Panc1 (cell line): ENCODE measurements at regions of chr17 and their contacts with region 1.

Region 1: DNA sequence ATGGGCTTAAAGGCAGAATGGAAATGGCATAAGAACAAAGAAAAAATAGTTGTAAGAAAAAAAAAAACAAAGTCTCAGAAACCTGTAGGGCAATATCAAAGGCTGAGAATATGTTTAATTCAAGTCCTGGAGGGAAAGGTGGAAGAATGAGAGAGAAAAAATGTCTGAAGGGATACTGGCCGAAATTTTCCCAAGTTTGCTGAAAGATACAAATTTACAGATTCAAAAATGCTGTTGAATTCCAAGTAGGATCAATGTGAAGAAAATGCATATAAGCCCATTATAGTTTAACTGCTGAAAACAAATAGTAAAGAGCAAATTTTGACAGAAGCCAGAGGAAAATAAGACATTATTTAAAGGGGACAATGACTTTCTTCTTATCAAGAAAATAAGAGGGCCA is 6.6 kb upstream of the USP22 start:
- DNase-seq: no peak
- ATAC-seq: no peak
- H3K4me3 ChIP-seq: no peak overlapping the region
- H3K27ac ChIP-seq: no peak overlapping the region
- H3K4me1 ChIP-seq: peaks cover 4% of the 10 kb centered on the region; the same call in 1 of the 2 replicates
- H3K27me3 ChIP-seq: no peaks in the 10 kb centered on the region
- CTCF ChIP-seq: no peak

Region 2: GRCh38 chr17:21098934-21099689 is 49.7 kb after region 1 on chr17:
- CTCF ChIA-PET with region 1: interaction called, 12 read pairs
- POLR2A ChIA-PET with region 1: no interaction called
- in situ Hi-C with region 1: no loop called
- intact Hi-C with region 1: no loop called
- DNase-seq: peak; percentile 55
- ATAC-seq: peak; percentile 99
- H3K4me3 ChIP-seq: peak overlapping the region; percentile 82 to 94
- H3K27ac ChIP-seq: peak overlapping the region; percentile 83
- H3K4me1 ChIP-seq: no peaks in the 10 kb centered on the region
- H3K27me3 ChIP-seq: no peaks in the 10 kb centered on the region
- CTCF ChIP-seq: no peak

Region 3: GRCh38 chr17:21772321-21772720 is 722.9 kb after region 1 on chr17:
- CTCF ChIA-PET with region 1: no interaction called
- POLR2A ChIA-PET with region 1: no interaction called
- in situ Hi-C with region 1: no loop called
- intact Hi-C with region 1: no loop called
- DNase-seq: no peak
- ATAC-seq: no peak
- H3K4me3 ChIP-seq: no peak overlapping the region
- H3K27ac ChIP-seq: no peak overlapping the region
- H3K4me1 ChIP-seq: no peaks in the 10 kb centered on the region
- H3K27me3 ChIP-seq: no peaks in the 10 kb centered on the region
- CTCF ChIP-seq: no peak